HEK293 (cell line): ENCODE measurements at regions of chr20 and their contacts with region 1.

Region 1: DNA sequence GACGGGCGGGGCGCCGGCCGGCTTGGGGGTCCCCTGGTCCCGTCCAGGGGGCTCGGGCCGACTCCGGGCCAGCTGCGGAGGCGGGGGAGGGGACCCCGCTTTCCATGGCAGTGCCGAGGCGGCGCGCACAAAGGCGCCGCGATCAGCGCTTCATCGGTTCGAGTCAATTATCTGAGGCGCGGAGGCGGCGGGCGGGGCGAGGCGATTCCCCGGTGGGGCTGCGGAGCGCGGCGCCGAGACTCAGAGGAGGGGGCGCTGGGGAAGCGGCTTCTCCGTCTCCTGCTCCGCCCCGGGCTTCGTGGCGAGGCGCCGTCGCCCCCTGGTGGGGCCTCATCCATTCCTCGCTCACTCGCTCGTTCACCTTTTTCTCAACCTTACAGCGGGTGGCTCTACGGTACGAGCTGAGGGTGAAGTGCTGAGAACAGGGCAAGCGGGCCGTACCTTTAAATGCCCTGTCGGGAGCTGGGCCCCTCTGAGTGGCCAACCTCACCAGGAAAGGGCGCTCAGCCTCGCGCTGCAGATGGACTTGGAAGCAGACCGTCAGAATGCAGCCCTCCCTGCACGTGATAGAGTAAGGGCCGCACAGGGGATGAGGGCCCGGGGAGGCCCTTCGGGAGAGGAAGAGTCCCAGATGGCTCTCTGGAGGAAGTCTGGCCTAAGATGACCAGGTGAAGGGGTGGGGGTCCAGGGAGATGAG is 39.9 kb downstream of the SLC52A3 start:
- H3K4me3 ChIP-seq: peak overlapping the region; percentile 30
- H3K27ac ChIP-seq: no peak overlapping the region
- H3K4me1 ChIP-seq: no peaks in the 10 kb centered on the region
- CTCF ChIP-seq: peak; percentile 96

Region 2: GRCh38 chr20:699811-700338 is 28.5 kb before region 1 on chr20:
- CTCF ChIA-PET with region 1: no interaction called
- POLR2A ChIA-PET with region 1: no interaction called
- H3K4me3 ChIP-seq: no peak overlapping the region
- H3K27ac ChIP-seq: no peak overlapping the region
- H3K4me1 ChIP-seq: no peaks in the 10 kb centered on the region
- CTCF ChIP-seq: no peak

Region 3: GRCh38 chr20:714453-714852 is 13.9 kb before region 1 on chr20:
- CTCF ChIA-PET with region 1: interaction called, 11 read pairs
- POLR2A ChIA-PET with region 1: no interaction called
- H3K4me3 ChIP-seq: no peak overlapping the region
- H3K27ac ChIP-seq: no peak overlapping the region
- H3K4me1 ChIP-seq: no peaks in the 10 kb centered on the region
- CTCF ChIP-seq: no peak

Region 4: GRCh38 chr20:884983-885952 is 156.9 kb after region 1 on chr20:
- CTCF ChIA-PET with region 1: no interaction called
- POLR2A ChIA-PET with region 1: no interaction called
- H3K4me3 ChIP-seq: no peak overlapping the region
- H3K27ac ChIP-seq: no peak overlapping the region
- H3K4me1 ChIP-seq: no peaks in the 10 kb centered on the region
- CTCF ChIP-seq: no peak